Posterior vena cava (tissue), 2 donors: ENCODE measurements at regions of chr1 and their contacts with region 1.

Region 1: GRCh38 chr1:234533975-234534876 is 55.2 kb upstream of the TARBP1 start:
- DNase-seq: peak; percentile 98

Region 2: GRCh38 chr1:234579967-234580366 is 45.7 kb after region 1 on chr1:
- intact Hi-C with region 1: loop called (anchors 2 to 5 kb)
- DNase-seq: no peak

Region 3: GRCh38 chr1:234997201-234997895 is 463.1 kb after region 1 on chr1:
- intact Hi-C with region 1: loop called in 1 of 2 experiments (anchors 10 kb)
- DNase-seq: peak; percentile 99